PC-3 (cell line): ENCODE measurements at regions of chr3 and their contacts with region 1.

Region 1: GRCh38 chr3:8741581-8742261 is 8.1 kb downstream of the CAV3 start:
- DNase-seq: peak; percentile 98
- ATAC-seq: peak; percentile 76
- H3K4me3 ChIP-seq: peak overlapping the region; percentile 45
- H3K27ac ChIP-seq: peak overlapping the region; percentile 91
- H3K4me1 ChIP-seq: peaks cover 51% of the 10 kb centered on the region
- H3K27me3 ChIP-seq: no peaks in the 10 kb centered on the region
- CTCF ChIP-seq: no peak

Region 2: GRCh38 chr3:8501371-8502131 is 240.2 kb before region 1 on chr3 and contains the start of gene LMCD1:
- CTCF ChIA-PET with region 1: no interaction called
- POLR2A ChIA-PET with region 1: no interaction called
- intact Hi-C with region 1: no loop called
- DNase-seq: peak; percentile 97
- ATAC-seq: peak; percentile 86
- H3K4me3 ChIP-seq: peak within 1 kb of the TSS; percentile 65
- H3K27ac ChIP-seq: peak within 1 kb of the TSS; percentile 83
- H3K4me1 ChIP-seq: peaks cover 89% of the 10 kb centered on the region
- H3K27me3 ChIP-seq: no peaks in the 10 kb centered on the region
- CTCF ChIP-seq: no peak
- total RNA-seq, gene LMCD1: 8.2 and 9.1 TPM in 2 replicates

Region 3: GRCh38 chr3:8629151-8630021 is 112.3 kb before region 1 on chr3:
- CTCF ChIA-PET with region 1: no interaction called
- POLR2A ChIA-PET with region 1: no interaction called
- intact Hi-C with region 1: loop called (anchors 1 kb)
- DNase-seq: peak; percentile 97
- ATAC-seq: peak; percentile 92
- H3K4me3 ChIP-seq: no peak overlapping the region
- H3K27ac ChIP-seq: peak overlapping the region; percentile 91
- H3K4me1 ChIP-seq: peaks cover 38% of the 10 kb centered on the region
- H3K27me3 ChIP-seq: no peaks in the 10 kb centered on the region
- CTCF ChIP-seq: no peak

Region 4: GRCh38 chr3:8678751-8679150 is 63.0 kb before region 1 on chr3:
- CTCF ChIA-PET with region 1: no interaction called
- POLR2A ChIA-PET with region 1: no interaction called
- intact Hi-C with region 1: loop called (anchors 1 kb)
- DNase-seq: no peak
- ATAC-seq: no peak
- H3K4me3 ChIP-seq: no peak overlapping the region
- H3K27ac ChIP-seq: no peak overlapping the region
- H3K4me1 ChIP-seq: peaks cover 32% of the 10 kb centered on the region
- H3K27me3 ChIP-seq: no peaks in the 10 kb centered on the region
- CTCF ChIP-seq: no peak

Region 5: DNA sequence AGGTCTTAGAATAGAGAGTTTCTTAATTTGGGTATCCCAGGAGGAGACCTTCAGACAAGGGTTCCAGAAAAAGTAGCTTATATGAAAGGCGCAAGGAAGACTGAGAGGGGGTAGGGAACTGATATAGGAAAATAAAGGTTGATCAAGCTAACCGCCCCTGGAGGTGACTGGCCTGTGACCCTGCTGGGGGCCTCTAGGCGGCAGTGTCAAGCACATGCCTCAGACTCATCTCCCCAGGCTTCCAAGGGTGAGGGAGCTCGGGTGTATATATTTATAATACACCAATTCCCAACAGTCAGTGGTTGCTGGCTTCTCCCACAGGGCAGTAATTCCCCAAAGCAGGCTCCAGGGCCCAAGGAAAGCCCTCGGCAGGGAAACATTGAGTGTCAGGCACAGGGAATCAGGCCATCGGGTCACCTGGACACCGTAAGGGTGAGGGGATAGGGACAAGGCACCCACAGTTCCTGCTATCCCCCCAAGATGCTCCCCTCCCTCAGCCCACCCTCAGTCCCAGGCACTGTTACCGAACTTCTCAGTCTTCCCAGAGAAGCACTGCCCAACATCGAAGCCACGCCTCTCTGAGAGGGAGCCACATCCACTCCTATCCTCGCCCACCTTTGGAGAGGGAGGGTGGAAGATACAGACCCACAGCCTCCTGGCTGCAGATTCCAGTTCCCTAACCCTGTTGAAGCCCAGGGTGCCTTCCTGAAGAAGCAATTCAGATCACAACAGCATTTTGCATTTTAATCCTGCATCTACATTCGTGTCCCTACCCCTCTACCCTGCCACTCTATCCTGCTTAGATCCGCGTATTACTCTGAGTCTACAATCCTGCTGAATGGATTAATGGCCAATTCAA is 27.6 kb before region 1 on chr3:
- CTCF ChIA-PET with region 1: interaction called, 3 read pairs
- POLR2A ChIA-PET with region 1: no interaction called
- intact Hi-C with region 1: loop called (anchors 2 kb)
- DNase-seq: no peak
- ATAC-seq: no peak
- H3K4me3 ChIP-seq: no peak overlapping the region
- H3K27ac ChIP-seq: no peak overlapping the region
- H3K4me1 ChIP-seq: peaks cover 14% of the 10 kb centered on the region
- H3K27me3 ChIP-seq: no peaks in the 10 kb centered on the region
- CTCF ChIP-seq: peak; percentile 32; the same call in 1 of the 2 replicates

Region 6: GRCh38 chr3:8724108-8724782 is 17.5 kb before region 1 on chr3:
- CTCF ChIA-PET with region 1: interaction called, 3 read pairs
- POLR2A ChIA-PET with region 1: interaction called, 7 read pairs
- intact Hi-C with region 1: loop called (anchors 1 kb)
- DNase-seq: peak; percentile 42
- ATAC-seq: peak; percentile 84
- H3K4me3 ChIP-seq: no peak overlapping the region
- H3K27ac ChIP-seq: no peak overlapping the region
- H3K4me1 ChIP-seq: peaks cover 13% of the 10 kb centered on the region; the same call in 1 of the 2 replicates
- H3K27me3 ChIP-seq: no peaks in the 10 kb centered on the region
- CTCF ChIP-seq: no peak